WTC11 (cell line): ENCODE measurements at regions of chr14 and their contacts with region 1.

Region 1: DNA sequence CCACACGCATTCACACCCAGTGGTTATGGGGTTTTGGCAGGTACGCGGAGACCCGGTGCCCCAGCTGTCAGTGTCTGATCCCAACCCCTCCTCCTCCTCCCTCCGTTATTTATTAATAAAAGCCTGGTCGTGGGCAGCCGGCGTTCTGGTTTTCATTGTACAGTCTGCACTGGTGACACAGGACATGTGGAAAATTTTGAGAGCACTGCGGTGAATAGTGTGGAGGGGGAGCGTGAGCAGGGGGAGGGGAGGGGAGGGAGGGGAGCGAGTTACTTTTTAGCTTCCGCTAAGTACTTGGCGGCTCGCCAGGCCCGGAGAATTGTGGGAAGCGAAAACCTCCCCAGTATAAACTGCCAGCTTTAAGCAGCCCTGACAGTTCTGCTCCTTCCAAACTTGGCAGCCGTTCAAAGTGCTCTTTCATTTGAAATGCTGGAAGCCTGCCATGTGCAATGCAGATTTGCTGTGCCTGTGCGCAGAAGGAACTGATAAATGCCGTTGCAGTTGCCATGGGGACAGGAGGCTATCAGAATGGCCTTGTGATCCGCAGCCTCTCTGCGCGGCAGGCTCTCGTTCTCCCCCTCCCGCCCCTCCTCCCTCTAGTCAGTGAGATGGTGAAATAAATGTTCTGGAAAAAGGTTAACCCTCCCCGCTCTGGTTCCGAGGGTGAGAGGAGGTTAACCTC is 11.7 kb upstream of the IRF2BPL start:
- DNase-seq: peak; percentile 78
- ATAC-seq: peak; percentile 51
- H3K4me3 Mint-ChIP-seq: peak overlapping the region; percentile 66
- H3K27ac Mint-ChIP-seq: peak overlapping the region; percentile 99
- H3K4me1 Mint-ChIP-seq: peaks cover 86% of the 10 kb centered on the region
- H3K27me3 Mint-ChIP-seq: peaks cover 7% of the 10 kb centered on the region
- CTCF ChIP-seq: no peak

Region 2: GRCh38 chr14:76947078-76947837 is 92.9 kb before region 1 on chr14:
- CTCF ChIA-PET with region 1: interaction called, 12 read pairs
- POLR2A ChIA-PET with region 1: no interaction called
- DNase-seq: peak; percentile 94
- ATAC-seq: peak; percentile 82
- H3K4me3 Mint-ChIP-seq: peak overlapping the region; percentile 49
- H3K27ac Mint-ChIP-seq: peak overlapping the region; percentile 99
- H3K4me1 Mint-ChIP-seq: peaks cover 51% of the 10 kb centered on the region
- H3K27me3 Mint-ChIP-seq: no peaks in the 10 kb centered on the region
- CTCF ChIP-seq: no peak

Region 3: GRCh38 chr14:77059276-77059915 is 19.2 kb after region 1 on chr14:
- CTCF ChIA-PET with region 1: interaction called, 10 read pairs
- POLR2A ChIA-PET with region 1: interaction called, 9 read pairs
- DNase-seq: peak; percentile 61
- ATAC-seq: peak; percentile 90
- H3K4me3 Mint-ChIP-seq: no peak overlapping the region
- H3K27ac Mint-ChIP-seq: no peak overlapping the region
- H3K4me1 Mint-ChIP-seq: peaks cover 22% of the 10 kb centered on the region
- H3K27me3 Mint-ChIP-seq: no peaks in the 10 kb centered on the region
- CTCF ChIP-seq: no peak

Region 4: GRCh38 chr14:77086017-77086736 is 46.0 kb after region 1 on chr14:
- CTCF ChIA-PET with region 1: no interaction called
- POLR2A ChIA-PET with region 1: no interaction called
- DNase-seq: no peak
- ATAC-seq: peak; percentile 23; the same call in 1 of the 2 replicates
- H3K4me3 Mint-ChIP-seq: no peak overlapping the region
- H3K27ac Mint-ChIP-seq: peak overlapping the region; percentile 97
- H3K4me1 Mint-ChIP-seq: peaks cover 49% of the 10 kb centered on the region
- H3K27me3 Mint-ChIP-seq: no peaks in the 10 kb centered on the region; the same call in none of the 2 replicates
- CTCF ChIP-seq: no peak